MCF 10A (cell line): ENCODE measurements at regions of chrX and their contacts with region 1.

Region 1: GRCh38 chrX:151974336-151975227 is at the start of gene GABRE:
- DNase-seq: peak; percentile 44
- H3K4me3 Mint-ChIP-seq: peak within 1 kb of the TSS; percentile 79
- H3K27ac Mint-ChIP-seq: peak within 1 kb of the TSS; percentile 73
- H3K4me1 Mint-ChIP-seq: peaks cover 35% of the 10 kb centered on the region
- H3K27me3 Mint-ChIP-seq: no peaks in the 10 kb centered on the region
- CTCF ChIP-seq: no peak
- total RNA-seq, gene GABRE: 12.9 and 19.3 TPM in 2 replicates

Region 2: DNA sequence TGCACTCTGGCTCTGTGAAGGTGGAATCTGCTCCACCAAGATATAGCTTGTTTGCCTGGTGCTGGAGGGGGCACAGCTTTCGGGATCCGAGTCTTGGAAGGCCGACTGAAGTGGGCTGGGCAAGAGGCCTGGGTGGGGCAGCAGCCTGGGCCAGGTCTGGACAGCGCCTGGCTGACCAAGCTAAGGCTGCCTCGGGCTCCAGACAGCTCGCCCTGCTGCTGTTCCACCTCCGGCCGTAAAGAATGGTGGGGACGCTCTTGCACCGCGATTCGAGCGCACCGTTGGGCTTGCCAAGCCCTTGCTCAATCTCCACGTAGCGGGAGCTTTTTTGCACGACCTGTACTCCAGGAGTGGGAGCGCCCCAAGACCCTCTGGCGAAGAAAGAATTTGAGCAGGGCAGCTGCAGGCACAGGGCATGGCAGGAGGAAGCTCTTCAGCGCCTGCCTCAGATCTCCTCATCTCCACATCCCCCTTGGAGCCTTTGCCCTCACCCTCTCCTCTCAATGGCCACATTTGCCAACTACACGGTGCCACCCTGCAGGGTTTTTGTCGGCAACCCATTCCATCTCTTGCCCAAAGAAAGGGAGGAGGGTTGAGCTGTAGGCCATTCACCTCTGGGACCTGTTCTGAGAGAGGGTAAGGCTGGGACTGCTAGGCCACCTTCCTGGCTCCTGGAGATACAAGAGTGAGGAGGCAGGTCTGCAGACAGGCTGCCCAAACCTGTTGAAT is 221.1 kb before region 1 on chrX:
- CTCF ChIA-PET with region 1: interaction called, 5 read pairs
- POLR2A ChIA-PET with region 1: interaction called, 8 read pairs
- intact Hi-C with region 1: loop called (anchors 5 kb)
- DNase-seq: peak; percentile 73
- H3K4me3 Mint-ChIP-seq: peak overlapping the region; percentile 36
- H3K27ac Mint-ChIP-seq: peak overlapping the region; percentile 11
- H3K4me1 Mint-ChIP-seq: peaks cover 12% of the 10 kb centered on the region
- H3K27me3 Mint-ChIP-seq: no peaks in the 10 kb centered on the region
- CTCF ChIP-seq: peak; percentile 78

Region 3: DNA sequence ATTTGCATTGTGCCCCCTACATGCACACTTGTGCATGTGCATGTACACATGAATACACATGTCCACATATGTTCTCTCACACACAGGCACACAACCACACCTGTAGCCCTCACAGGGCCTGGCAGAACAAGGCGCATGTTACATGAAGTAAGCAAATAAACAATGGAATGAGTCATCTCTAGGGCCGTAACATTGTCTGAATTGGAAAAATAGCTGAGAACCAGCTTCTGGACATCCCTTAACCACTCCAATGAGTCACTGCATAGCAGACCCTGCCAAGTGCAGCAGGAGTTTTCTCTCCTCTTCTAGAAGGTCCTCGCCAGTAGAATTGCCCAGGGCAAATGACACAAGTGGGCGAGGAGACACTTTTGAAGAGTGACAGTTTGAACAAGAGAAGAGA is 97.7 kb after region 1 on chrX:
- CTCF ChIA-PET with region 1: no interaction called
- POLR2A ChIA-PET with region 1: interaction called, 3 read pairs
- intact Hi-C with region 1: loop called (anchors 5 kb)
- DNase-seq: peak; percentile 94
- H3K4me3 Mint-ChIP-seq: peak overlapping the region; percentile 1
- H3K27ac Mint-ChIP-seq: no peak overlapping the region
- H3K4me1 Mint-ChIP-seq: peaks cover 6% of the 10 kb centered on the region
- H3K27me3 Mint-ChIP-seq: no peaks in the 10 kb centered on the region
- CTCF ChIP-seq: no peak

Region 4: GRCh38 chrX:152343306-152343705 is 368.7 kb after region 1 on chrX:
- CTCF ChIA-PET with region 1: interaction called, 3 read pairs
- POLR2A ChIA-PET with region 1: no interaction called
- intact Hi-C with region 1: loop called (anchors 5 kb)
- DNase-seq: peak; percentile 16
- H3K4me3 Mint-ChIP-seq: no peak overlapping the region
- H3K27ac Mint-ChIP-seq: no peak overlapping the region
- H3K4me1 Mint-ChIP-seq: peaks cover 7% of the 10 kb centered on the region
- H3K27me3 Mint-ChIP-seq: no peaks in the 10 kb centered on the region
- CTCF ChIP-seq: peak; percentile 19